CD4-positive, alpha-beta T cell (primary cell): ENCODE measurements at regions of chr3 and their contacts with region 1.

Region 1: GRCh38 chr3:16504242-16504641 is 9.3 kb downstream of the RFTN1 start:
- DNase-seq: peak in 2 of 14 experiments; percentile 38 to 45
- ATAC-seq: peak; percentile 19
- H3K4me3 ChIP-seq: no peak overlapping the region
- H3K4me3 Mint-ChIP-seq: no peak overlapping the region
- H3K27ac ChIP-seq: no peak overlapping the region
- H3K27ac Mint-ChIP-seq: peak overlapping the region; percentile 61
- H3K4me1 ChIP-seq: peaks cover 16% of the 10 kb centered on the region
- H3K4me1 Mint-ChIP-seq: peaks cover 81% of the 10 kb centered on the region
- H3K27me3 ChIP-seq: no peaks in the 10 kb centered on the region
- H3K27me3 Mint-ChIP-seq: no peaks in the 10 kb centered on the region
- CTCF ChIP-seq: no peak

Region 2: DNA sequence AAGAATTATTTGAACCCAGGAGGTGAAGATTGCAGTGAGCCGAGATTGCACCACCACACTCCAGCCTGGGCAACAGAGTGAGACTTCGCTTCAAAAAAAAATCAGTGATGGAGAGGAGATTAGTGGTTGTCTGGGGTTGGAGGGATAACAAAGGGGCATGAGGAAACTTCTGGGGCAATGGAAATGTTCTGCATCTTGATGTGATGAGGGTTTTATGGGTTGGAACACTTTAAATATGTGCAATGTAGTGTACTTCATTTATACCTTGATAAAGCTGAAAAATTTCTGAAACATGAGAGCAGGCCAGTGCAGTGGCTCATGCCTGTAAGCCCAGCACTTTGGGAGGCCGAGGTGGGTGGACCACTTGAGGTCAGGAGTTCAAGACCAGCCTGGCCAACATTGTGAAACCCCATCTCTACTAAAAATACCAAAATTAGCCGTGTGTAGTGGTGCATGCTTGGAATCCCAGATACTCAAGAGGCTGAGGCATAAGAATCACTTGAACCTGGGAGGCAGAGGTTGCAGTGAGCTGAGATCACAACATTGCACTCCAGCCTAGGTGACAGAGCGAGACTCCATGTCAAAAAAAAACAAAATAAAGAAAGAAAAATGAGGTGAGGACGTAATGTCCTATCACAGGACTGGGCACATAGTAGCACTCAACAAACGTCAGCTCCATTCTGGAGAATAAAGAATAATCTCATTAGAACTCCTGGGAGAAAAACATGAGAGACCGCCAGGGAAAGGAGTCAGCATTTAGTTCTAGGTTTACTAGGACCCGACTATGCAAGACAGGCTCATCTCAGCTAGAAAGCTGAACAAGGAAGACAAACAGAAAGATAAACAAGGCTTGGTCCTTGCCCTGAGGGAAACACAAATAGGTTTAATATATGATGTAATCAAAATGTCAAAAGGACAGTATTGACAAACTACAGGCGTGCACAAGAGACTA is 14.6 kb before region 1 on chr3:
- CTCF ChIA-PET with region 1: interaction called, 3 read pairs
- POLR2A ChIA-PET with region 1: no interaction called
- intact Hi-C with region 1: loop called in 1 of 2 experiments (anchors 2 kb)
- DNase-seq: no peak
- ATAC-seq: no peak
- H3K4me3 ChIP-seq: no peak overlapping the region
- H3K4me3 Mint-ChIP-seq: no peak overlapping the region
- H3K27ac ChIP-seq: no peak overlapping the region
- H3K27ac Mint-ChIP-seq: no peak overlapping the region
- H3K4me1 ChIP-seq: no peaks in the 10 kb centered on the region
- H3K4me1 Mint-ChIP-seq: peaks cover 52% of the 10 kb centered on the region
- H3K27me3 ChIP-seq: no peaks in the 10 kb centered on the region
- H3K27me3 Mint-ChIP-seq: no peaks in the 10 kb centered on the region
- CTCF ChIP-seq: no peak

Region 3: GRCh38 chr3:17605032-17605431 is 1100.8 kb after region 1 on chr3:
- CTCF ChIA-PET with region 1: no interaction called
- POLR2A ChIA-PET with region 1: no interaction called
- intact Hi-C with region 1: no loop called
- DNase-seq: no peak
- ATAC-seq: no peak
- H3K4me3 ChIP-seq: no peak overlapping the region
- H3K4me3 Mint-ChIP-seq: no peak overlapping the region
- H3K27ac ChIP-seq: no peak overlapping the region
- H3K27ac Mint-ChIP-seq: no peak overlapping the region
- H3K4me1 ChIP-seq: no peaks in the 10 kb centered on the region
- H3K4me1 Mint-ChIP-seq: no peaks in the 10 kb centered on the region
- H3K27me3 ChIP-seq: no peaks in the 10 kb centered on the region
- H3K27me3 Mint-ChIP-seq: no peaks in the 10 kb centered on the region
- CTCF ChIP-seq: no peak